Caco-2 (cell line): ENCODE measurements at regions of chr20 and their contacts with region 1.

Region 1: GRCh38 chr20:41173161-41173721 is 35.9 kb downstream of the PLCG1 start:
- DNase-seq: peak; percentile 85 to 94
- H3K4me3 ChIP-seq: no peak overlapping the region
- H3K4me3 Mint-ChIP-seq: no peak overlapping the region
- H3K27ac Mint-ChIP-seq: no peak overlapping the region
- H3K4me1 ChIP-seq: no peaks in the 10 kb centered on the region
- H3K4me1 Mint-ChIP-seq: no peaks in the 10 kb centered on the region
- H3K27me3 ChIP-seq: no peaks in the 10 kb centered on the region
- H3K27me3 Mint-ChIP-seq: no peaks in the 10 kb centered on the region
- CTCF ChIP-seq: peak; percentile 99 to 100

Region 2: DNA sequence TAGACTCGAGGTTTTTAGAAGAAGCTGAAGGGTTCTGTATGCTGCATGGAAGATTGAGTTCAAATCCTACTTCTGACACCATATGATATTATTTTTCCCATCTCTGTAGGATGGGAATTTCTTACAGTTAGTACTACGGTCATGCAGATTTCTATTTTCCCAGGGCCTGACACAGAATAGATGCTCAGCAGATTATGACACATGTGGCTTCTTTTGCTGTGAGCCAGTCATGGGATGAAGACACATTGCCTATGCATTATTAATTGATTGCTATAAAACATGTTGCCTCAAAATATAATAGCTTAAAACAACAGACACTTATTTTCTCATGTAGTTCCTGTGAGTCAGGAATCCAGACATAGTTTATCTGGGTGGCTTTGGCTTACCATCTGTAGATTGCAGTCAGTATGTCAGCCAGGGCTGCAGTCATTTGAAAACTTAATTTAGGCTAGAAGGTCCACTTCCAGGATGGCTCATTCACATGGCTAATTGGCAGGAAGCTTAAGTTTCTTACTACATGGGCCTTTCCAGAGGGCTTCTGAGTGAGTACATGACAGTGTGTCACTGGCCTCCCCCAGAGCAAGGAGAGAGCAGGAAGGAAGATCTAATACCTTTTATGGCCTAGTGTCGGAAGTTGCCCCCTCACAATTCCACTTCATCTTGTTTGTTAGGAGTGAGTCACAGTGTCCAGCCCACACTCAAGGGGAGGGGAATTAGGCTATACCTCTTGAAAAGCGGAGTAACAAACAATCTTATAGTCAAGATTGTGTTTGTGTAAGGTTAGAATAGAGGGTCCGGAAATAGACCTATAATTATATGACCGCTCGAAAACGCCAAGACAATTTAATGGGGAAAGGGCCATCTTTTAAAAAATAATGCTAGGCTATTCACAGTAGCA is 115.0 kb before region 1 on chr20:
- CTCF ChIA-PET with region 1: no interaction called
- POLR2A ChIA-PET with region 1: no interaction called
- intact Hi-C with region 1: no loop called
- DNase-seq: peak in 1 of 2 experiments; percentile 56
- H3K4me3 ChIP-seq: no peak overlapping the region
- H3K4me3 Mint-ChIP-seq: no peak overlapping the region
- H3K27ac Mint-ChIP-seq: no peak overlapping the region
- H3K4me1 ChIP-seq: peaks cover 10% of the 10 kb centered on the region; the same call in 1 of the 2 replicates
- H3K4me1 Mint-ChIP-seq: peaks cover 32% of the 10 kb centered on the region
- H3K27me3 ChIP-seq: no peaks in the 10 kb centered on the region
- H3K27me3 Mint-ChIP-seq: no peaks in the 10 kb centered on the region
- CTCF ChIP-seq: no peak

Region 3: DNA sequence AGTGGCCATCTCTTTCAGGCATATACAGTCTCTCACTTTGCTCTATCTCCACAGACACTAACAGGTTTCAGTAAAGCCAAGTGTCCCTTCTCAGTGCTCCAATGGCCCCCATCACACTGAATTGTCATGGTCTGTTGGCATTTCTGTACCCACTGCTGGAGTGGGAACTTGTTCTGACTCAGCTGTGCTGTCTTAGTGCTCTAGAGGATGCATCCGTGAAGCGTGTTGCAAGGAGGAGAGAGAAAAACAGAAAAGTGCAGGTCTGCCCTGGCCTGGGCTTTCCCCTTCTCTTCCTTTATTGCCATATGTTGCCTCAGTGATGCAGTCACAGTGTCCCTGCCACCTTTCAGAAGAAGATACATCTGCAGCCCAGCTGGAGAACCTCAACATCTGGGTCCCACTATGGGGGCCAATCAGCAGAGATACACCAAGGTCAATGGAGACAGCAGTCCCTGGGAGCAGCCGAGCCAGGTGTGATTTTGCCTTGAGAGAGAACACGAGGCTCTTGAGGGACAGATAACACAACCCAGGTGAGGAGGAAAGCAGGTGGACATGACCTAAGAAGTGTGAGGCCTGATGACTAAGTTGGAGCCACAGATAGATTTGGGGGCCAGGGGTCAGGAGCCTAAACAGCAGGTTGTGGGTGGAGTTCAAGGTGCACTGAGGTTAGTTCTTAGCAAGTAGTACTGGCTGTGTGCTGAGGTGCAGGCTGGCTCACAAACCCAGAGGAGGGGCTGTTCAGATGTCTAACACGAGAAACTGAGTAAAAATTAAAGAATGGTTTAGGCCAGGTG is 41.5 kb before region 1 on chr20:
- CTCF ChIA-PET with region 1: interaction called, 25 read pairs
- POLR2A ChIA-PET with region 1: no interaction called
- intact Hi-C with region 1: no loop called
- DNase-seq: peak in 1 of 2 experiments; percentile 37
- H3K4me3 ChIP-seq: no peak overlapping the region
- H3K4me3 Mint-ChIP-seq: no peak overlapping the region
- H3K27ac Mint-ChIP-seq: peak overlapping the region; percentile 40
- H3K4me1 ChIP-seq: peaks cover 7% of the 10 kb centered on the region
- H3K4me1 Mint-ChIP-seq: peaks cover 21% of the 10 kb centered on the region
- H3K27me3 ChIP-seq: no peaks in the 10 kb centered on the region
- H3K27me3 Mint-ChIP-seq: no peaks in the 10 kb centered on the region
- CTCF ChIP-seq: no peak

Region 4: DNA sequence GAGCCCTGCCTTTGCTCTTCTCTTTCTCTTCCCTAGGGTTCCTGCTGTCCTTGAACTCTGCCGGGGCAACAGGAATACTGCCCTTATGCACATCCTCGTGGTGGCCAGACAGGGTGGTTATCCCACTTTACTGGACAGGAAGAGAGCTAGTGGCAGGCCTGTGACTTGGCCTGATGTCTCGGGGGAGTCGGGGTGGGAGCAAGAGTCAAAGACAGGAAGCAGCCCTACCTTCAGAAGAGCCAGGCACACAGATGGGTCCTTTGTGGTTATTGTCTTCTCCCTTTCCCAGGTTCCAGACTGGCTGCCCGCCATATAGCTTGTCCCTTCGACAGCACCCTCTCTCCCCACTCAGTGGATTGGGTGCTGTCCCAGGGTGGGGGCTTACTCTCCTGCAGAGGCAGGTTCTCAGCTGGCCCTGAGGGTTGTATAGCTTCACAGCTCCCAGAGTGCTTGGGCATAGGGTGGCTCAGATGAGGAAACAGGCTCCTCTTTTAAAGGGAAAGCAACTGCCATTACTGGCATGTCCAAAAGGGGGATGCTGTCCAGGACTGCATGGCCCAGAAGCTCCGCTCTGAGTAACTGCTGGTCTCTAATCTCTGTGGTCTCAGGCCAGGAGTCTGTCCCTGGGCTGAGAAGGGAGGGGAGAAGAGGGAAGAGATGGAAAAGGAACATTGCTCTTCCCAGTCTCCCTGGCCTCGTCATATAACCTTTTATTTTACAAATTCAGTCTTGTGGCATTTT is 18.6 kb before region 1 on chr20:
- CTCF ChIA-PET with region 1: interaction called, 29 read pairs
- POLR2A ChIA-PET with region 1: no interaction called
- intact Hi-C with region 1: no loop called
- DNase-seq: no peak
- H3K4me3 ChIP-seq: no peak overlapping the region
- H3K4me3 Mint-ChIP-seq: no peak overlapping the region
- H3K27ac Mint-ChIP-seq: no peak overlapping the region
- H3K4me1 ChIP-seq: peaks cover 18% of the 10 kb centered on the region
- H3K4me1 Mint-ChIP-seq: peaks cover 27% of the 10 kb centered on the region
- H3K27me3 ChIP-seq: no peaks in the 10 kb centered on the region
- H3K27me3 Mint-ChIP-seq: no peaks in the 10 kb centered on the region
- CTCF ChIP-seq: no peak

Region 5: GRCh38 chr20:41213150-41213820 is 40.0 kb after region 1 on chr20:
- CTCF ChIA-PET with region 1: no interaction called
- POLR2A ChIA-PET with region 1: no interaction called
- intact Hi-C with region 1: no loop called
- DNase-seq: no peak
- H3K4me3 ChIP-seq: no peak overlapping the region
- H3K4me3 Mint-ChIP-seq: no peak overlapping the region
- H3K27ac Mint-ChIP-seq: no peak overlapping the region
- H3K4me1 ChIP-seq: no peaks in the 10 kb centered on the region
- H3K4me1 Mint-ChIP-seq: no peaks in the 10 kb centered on the region
- H3K27me3 ChIP-seq: no peaks in the 10 kb centered on the region
- H3K27me3 Mint-ChIP-seq: no peaks in the 10 kb centered on the region
- CTCF ChIP-seq: no peak

Region 6: DNA sequence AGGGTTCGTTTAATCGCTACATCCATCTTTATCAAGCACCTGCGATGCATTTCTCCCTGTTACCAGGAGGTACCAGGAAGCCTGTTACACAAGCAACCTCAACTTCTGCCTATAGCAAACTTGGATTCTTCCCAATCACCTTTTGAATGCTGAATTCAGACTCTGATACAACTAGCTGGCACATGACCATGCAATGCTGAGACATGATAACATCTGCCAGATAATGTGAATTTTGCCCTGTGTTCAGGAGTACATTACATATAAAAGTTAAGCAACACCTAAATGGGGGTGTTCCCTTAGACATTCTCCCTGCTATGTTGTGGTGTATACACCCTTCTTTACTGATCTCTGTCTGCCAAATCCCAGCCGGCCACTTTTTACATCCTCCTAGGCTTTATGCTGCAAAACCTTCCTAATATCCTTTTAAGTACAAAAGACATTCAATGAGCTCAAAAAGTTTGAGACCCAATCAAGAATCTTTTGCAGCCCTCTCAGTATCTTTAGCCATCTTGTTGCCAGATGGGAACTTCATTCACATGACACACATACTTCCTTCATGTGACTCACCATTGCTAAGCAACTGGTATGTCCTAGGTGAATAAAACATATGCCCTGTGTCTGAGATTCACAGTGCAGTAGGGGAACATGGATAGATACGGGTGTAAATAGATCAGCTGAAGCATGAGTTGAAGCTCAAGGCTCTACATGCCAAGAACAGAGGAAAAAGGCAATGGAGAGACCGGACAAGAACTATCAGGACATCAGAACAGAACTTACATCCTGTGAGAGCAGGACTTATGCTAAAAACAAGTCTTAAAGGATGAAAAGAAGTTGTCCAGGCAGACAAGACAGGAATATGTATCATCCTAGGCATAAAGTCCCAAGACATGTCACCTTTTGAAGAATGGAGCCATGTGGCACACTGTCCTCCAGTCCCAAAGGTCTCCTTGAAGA is 60.0 kb after region 1 on chr20:
- CTCF ChIA-PET with region 1: interaction called, 42 read pairs
- POLR2A ChIA-PET with region 1: no interaction called
- intact Hi-C with region 1: loop called (anchors 1 kb)
- DNase-seq: no peak
- H3K4me3 ChIP-seq: no peak overlapping the region
- H3K4me3 Mint-ChIP-seq: peak overlapping the region; percentile 39
- H3K27ac Mint-ChIP-seq: peak overlapping the region; percentile 10
- H3K4me1 ChIP-seq: peaks cover 9% of the 10 kb centered on the region
- H3K4me1 Mint-ChIP-seq: peaks cover 9% of the 10 kb centered on the region
- H3K27me3 ChIP-seq: no peaks in the 10 kb centered on the region; the same call in 1 of the 2 replicates
- H3K27me3 Mint-ChIP-seq: no peaks in the 10 kb centered on the region
- CTCF ChIP-seq: no peak

Region 7: DNA sequence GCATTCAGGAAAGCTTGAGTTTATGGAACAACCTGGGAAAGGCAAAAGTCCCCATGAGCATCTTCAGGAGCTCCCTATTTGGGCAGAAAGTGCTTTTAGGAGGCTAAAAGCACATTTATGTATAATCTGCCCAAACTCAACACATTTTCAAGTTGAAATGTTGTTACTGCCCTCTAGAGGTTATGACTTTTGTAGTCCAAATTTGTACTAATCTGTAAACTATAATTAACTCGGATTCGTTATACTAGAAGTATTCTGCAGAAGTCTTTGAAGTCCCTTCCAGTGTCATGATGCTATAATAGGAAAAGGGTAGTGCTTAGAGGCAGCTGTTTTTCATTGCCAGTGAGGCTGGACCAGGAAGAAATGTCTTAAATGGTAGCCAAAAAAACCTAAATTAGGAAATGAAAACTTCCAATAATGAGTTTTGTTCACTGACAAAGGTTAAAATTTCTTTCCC is 238.2 kb after region 1 on chr20:
- CTCF ChIA-PET with region 1: interaction called, 4 read pairs
- POLR2A ChIA-PET with region 1: no interaction called
- intact Hi-C with region 1: loop called (anchors 2 kb)
- DNase-seq: no peak
- H3K4me3 ChIP-seq: no peak overlapping the region
- H3K4me3 Mint-ChIP-seq: no peak overlapping the region
- H3K27ac Mint-ChIP-seq: no peak overlapping the region
- H3K4me1 ChIP-seq: peaks cover 13% of the 10 kb centered on the region
- H3K4me1 Mint-ChIP-seq: peaks cover 13% of the 10 kb centered on the region
- H3K27me3 ChIP-seq: no peaks in the 10 kb centered on the region
- H3K27me3 Mint-ChIP-seq: no peaks in the 10 kb centered on the region
- CTCF ChIP-seq: peak; percentile 49 to 65

Region 8: DNA sequence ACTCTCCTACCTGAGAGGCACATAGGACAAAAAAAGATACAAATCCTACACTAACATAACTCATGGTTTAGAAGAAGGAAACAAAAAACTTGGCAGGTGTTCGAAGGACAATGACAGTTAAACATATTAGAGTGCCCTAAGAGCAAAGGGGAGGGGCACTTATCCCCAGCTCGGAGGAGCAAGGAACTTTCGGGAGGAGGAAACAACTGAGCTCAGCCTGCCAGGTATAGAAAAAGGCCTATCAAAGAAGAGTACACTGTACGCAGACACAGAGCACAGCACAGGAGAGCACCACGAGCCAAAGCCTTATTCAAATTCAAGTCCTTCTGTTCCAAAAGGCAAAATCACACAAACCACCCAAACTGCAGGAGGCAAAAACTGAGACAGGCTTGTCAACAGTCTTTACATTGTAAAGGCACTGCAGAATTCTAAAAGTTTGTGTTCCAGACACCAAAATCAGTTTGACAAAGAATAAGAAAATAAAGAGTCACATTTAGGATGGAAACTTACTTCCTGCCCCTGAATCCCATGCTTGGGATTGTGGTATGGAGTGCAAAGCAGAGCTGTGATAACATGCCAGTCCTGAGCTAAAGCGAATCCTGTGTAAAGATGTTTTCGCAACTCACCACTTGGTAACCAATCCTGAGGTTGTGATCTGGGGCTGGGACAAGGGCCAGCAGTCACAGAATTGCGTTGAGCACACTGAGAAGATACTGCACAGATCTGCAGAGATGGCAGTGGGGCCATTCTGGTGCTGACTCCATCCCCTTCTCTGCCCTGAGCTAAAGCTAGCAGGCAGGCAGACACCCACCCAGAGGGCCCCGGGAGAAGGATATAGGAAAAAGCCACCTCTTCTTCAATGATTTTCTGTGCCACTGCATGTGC is 336.3 kb after region 1 on chr20:
- CTCF ChIA-PET with region 1: no interaction called
- POLR2A ChIA-PET with region 1: no interaction called
- intact Hi-C with region 1: no loop called
- DNase-seq: peak in 1 of 2 experiments; percentile 24
- H3K4me3 ChIP-seq: no peak overlapping the region
- H3K4me3 Mint-ChIP-seq: no peak overlapping the region
- H3K27ac Mint-ChIP-seq: no peak overlapping the region
- H3K4me1 ChIP-seq: peaks cover 7% of the 10 kb centered on the region
- H3K4me1 Mint-ChIP-seq: peaks cover 25% of the 10 kb centered on the region
- H3K27me3 ChIP-seq: no peaks in the 10 kb centered on the region
- H3K27me3 Mint-ChIP-seq: no peaks in the 10 kb centered on the region
- CTCF ChIP-seq: no peak